Heart right ventricle (tissue), 16 donors: ENCODE measurements at regions of chr18 and their contacts with region 1.

Region 1: DNA sequence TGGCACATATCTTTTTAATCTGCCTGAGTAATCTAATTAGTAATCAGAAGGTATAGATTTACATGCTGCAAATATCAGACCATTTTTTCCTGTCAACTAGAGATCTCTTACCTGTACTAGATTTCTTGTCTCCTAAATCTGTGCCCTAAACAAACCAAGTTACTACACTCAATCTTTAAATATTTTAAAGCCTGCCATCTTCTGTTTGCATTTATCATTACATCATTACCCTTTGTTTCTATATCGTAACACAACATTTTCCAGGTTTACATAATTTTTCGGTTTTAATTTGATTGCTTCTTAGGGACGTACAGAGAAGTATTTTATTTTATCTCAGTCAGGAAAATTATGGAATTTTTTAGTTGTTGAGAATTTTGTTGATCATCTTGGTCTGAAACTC is 25.7 kb downstream of the PSMA8 start:
- DNase-seq: no peak
- ATAC-seq: no peak
- H3K4me3 ChIP-seq: no peak overlapping the region
- H3K27ac ChIP-seq: no peak overlapping the region
- H3K4me1 ChIP-seq: no peaks in the 10 kb centered on the region
- H3K27me3 ChIP-seq: no peaks in the 10 kb centered on the region
- CTCF ChIP-seq: peak in 3 of 9 donors; percentile 17 to 43 (median 25)

Region 2: DNA sequence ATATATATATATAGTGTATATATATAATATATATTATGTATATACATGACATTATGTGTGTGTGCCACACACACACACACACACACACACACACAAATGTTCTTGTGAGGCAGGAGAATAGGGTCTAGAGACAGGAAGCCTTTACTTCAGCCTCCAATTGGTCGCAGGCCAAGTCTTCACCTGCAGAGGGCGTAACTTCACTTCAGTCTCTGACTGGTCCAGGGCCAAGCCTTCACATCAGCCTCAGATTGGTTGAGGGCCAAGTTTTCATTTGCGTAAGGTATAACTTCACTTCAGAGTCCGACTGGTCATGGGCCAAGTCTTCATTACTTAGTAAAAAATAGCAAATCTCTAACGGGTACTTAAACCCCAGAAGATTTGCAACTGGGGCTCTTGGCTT is 55.8 kb before region 1 on chr18:
- intact Hi-C with region 1: loop called in 2 of 10 experiments (anchors 10 kb)
- DNase-seq: no peak
- ATAC-seq: no peak
- H3K4me3 ChIP-seq: no peak overlapping the region
- H3K27ac ChIP-seq: no peak overlapping the region
- H3K4me1 ChIP-seq: no peaks in the 10 kb centered on the region
- H3K27me3 ChIP-seq: no peaks in the 10 kb centered on the region
- CTCF ChIP-seq: no peak

Region 3: DNA sequence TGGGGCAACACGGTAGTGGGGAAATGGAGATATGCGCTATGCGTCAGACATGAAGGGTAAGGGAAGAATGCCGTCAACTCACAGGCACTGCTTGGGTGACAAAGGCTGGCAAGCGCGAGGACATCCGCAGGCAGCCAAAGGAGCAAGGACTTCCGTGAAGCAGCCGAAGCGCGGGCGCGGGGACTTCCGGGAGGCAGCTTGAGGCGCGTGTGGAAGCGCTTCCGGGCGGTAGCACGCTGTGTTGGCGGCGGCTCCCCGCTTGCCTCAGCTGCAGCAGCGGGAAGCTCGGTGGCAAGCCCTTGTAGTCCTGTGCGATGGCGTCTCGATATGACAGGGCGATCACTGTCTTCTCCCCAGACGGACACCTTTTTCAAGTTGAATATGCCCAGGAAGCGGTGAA is 25.7 kb before region 1 on chr18 and contains the start of gene PSMA8:
- intact Hi-C with region 1: no loop called
- DNase-seq: peak; percentile 3 to 44
- ATAC-seq: peak in 2 of 8 donors; percentile 49 to 61
- H3K4me3 ChIP-seq: peak within 1 kb of the TSS in 7 of 10 donors; percentile 2 to 32 (median 26)
- H3K27ac ChIP-seq: no peak within 1 kb of the TSS
- H3K4me1 ChIP-seq: no peaks in the 10 kb centered on the region
- H3K27me3 ChIP-seq: peaks cover 0 to 6% (median 0%) of the 10 kb centered on the region in 7 donors
- CTCF ChIP-seq: no peak
- total RNA-seq, gene PSMA8: 0.38 TPM in 1 of 10 donors, not detected in the others

Region 4: GRCh38 chr18:26322890-26323653 is 163.7 kb after region 1 on chr18:
- intact Hi-C with region 1: no loop called
- DNase-seq: no peak
- ATAC-seq: no peak
- H3K4me3 ChIP-seq: no peak overlapping the region
- H3K27ac ChIP-seq: no peak overlapping the region
- H3K4me1 ChIP-seq: no peaks in the 10 kb centered on the region
- H3K27me3 ChIP-seq: no peaks in the 10 kb centered on the region
- CTCF ChIP-seq: no peak